ENCODE measurements at regions of chr19 and their contacts with region 1.

Region 1: DNA sequence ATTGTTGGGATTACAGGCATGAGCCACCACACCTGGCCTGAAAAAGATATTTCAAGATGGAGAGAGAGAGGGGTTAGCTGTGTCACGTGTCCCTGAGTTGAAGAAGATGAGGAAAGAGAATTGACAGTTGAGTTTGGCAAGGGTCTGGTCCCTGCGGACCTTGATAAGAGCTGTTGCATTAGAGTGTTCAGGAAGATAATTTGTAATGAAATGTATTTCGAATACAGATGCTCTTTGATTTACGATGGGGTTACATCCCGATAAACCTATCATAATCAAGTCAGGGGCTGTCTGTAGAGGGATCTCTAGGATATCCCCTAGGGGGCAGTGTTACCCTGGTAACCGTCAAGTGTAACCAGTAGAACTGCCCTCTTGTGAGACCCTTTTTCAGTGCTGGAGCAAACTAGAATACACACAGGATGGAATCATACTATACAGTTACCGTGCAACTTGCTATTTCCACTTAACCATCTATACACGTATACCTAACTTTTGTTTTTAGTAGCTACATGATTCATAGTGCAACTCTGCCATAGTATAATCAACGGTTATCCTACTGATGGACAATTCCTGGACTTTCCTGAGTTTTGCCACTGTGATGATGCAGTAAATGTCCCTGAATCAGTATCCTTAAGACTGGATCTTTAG is 1.5 kb upstream of the ELOF1 start:
- DNase-seq: peak in 32 of 35 experiments; percentile 18 to 83 (median 50)
- ATAC-seq: peak in 2 of 4 experiments; percentile 18 to 50
- H3K4me3 ChIP-seq: no peak overlapping the region
- H3K4me3 Mint-ChIP-seq: peak overlapping the region; percentile 63 to 98 (median 86)
- H3K27ac ChIP-seq: no peak overlapping the region
- H3K27ac Mint-ChIP-seq: peak overlapping the region; percentile 13 to 42
- H3K4me1 ChIP-seq: peaks cover 9 to 30% of the 10 kb centered on the region in 2 experiments
- H3K4me1 Mint-ChIP-seq: peaks cover 39 to 43% (median 42%) of the 10 kb centered on the region in 3 donors
- H3K27me3 ChIP-seq: no peaks in the 10 kb centered on the region
- H3K27me3 Mint-ChIP-seq: no peaks in the 10 kb centered on the region

Region 2: GRCh38 chr19:11463391-11463790 is 97.1 kb before region 1 on chr19:
- CTCF ChIA-PET with region 1: no interaction called
- POLR2A ChIA-PET with region 1: no interaction called
- DNase-seq: peak in 1 of 35 experiments; percentile 10
- ATAC-seq: peak in 2 of 4 experiments; percentile 38 to 49
- H3K4me3 ChIP-seq: no peak overlapping the region
- H3K4me3 Mint-ChIP-seq: no peak overlapping the region
- H3K27ac ChIP-seq: no peak overlapping the region
- H3K27ac Mint-ChIP-seq: no peak overlapping the region
- H3K4me1 ChIP-seq: no peaks in the 10 kb centered on the region
- H3K4me1 Mint-ChIP-seq: peaks cover 0 to 4% (median 2%) of the 10 kb centered on the region in 3 donors
- H3K27me3 ChIP-seq: peaks cover 0 to 35% of the 10 kb centered on the region in 2 experiments
- H3K27me3 Mint-ChIP-seq: peaks cover 14 to 15% of the 10 kb centered on the region in 2 donors

Region 3: DNA sequence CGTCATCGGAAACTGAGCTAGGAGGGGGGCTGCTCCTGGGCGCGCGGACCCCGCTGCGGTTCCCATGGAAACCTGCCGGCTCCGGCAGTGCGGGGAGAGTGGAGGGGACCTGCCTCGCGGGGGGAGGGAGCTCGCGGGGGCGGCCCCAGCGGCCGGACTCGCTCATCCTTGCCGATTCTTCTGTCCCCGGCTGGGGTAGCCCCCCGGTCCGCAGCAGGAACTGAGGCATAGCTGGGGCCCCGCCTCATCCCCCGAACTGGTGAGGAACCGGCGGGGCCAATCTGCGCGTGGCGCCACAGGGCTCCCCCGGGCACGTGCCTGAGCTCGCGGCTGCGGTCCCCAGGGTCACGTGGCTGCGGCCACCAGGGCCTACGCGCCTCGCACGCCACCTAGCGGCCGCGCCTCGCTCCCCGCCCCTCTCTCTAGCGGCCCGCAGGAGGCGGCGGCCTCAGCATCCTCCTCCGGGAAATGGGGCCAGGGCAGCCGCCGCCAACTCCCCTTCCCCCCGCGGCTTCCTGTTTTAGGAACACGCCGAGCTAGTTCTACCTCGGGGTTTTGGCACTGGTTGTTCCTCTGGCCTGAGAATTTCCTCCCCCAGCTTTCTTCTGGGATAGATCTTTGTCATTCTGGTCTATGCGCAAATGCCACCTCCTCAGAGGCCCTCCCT is 78.0 kb before region 1 on chr19:
- CTCF ChIA-PET with region 1: no interaction called
- POLR2A ChIA-PET with region 1: no interaction called
- DNase-seq: peak; percentile 52 to 95 (median 79)
- ATAC-seq: peak; percentile 82 to 86 (median 84)
- H3K4me3 ChIP-seq: peak overlapping the region; percentile 14 to 49
- H3K4me3 Mint-ChIP-seq: peak overlapping the region; percentile 31 to 71 (median 70)
- H3K27ac ChIP-seq: no peak overlapping the region
- H3K27ac Mint-ChIP-seq: no peak overlapping the region
- H3K4me1 ChIP-seq: peaks cover 6 to 33% of the 10 kb centered on the region in 2 experiments
- H3K4me1 Mint-ChIP-seq: peaks cover 19 to 30% (median 29%) of the 10 kb centered on the region in 3 donors
- H3K27me3 ChIP-seq: peaks cover 5 to 48% of the 10 kb centered on the region in 2 experiments
- H3K27me3 Mint-ChIP-seq: peaks cover 20 to 35% of the 10 kb centered on the region in 2 donors

Region 4: GRCh38 chr19:11587302-11587974 is 26.9 kb after region 1 on chr19:
- CTCF ChIA-PET with region 1: interaction called, 5 to 10 read pairs
- POLR2A ChIA-PET with region 1: no interaction called
- DNase-seq: peak; percentile 37 to 84 (median 68)
- ATAC-seq: peak; percentile 89 to 93 (median 90)
- H3K4me3 ChIP-seq: no peak overlapping the region
- H3K4me3 Mint-ChIP-seq: no peak overlapping the region
- H3K27ac ChIP-seq: no peak overlapping the region
- H3K27ac Mint-ChIP-seq: no peak overlapping the region
- H3K4me1 ChIP-seq: peaks cover 0 to 2% of the 10 kb centered on the region in 2 experiments
- H3K4me1 Mint-ChIP-seq: peaks cover 2 to 13% (median 10%) of the 10 kb centered on the region in 3 donors
- H3K27me3 ChIP-seq: peaks cover 0 to 2% of the 10 kb centered on the region in 2 experiments
- H3K27me3 Mint-ChIP-seq: no peaks in the 10 kb centered on the region

Region 5: DNA sequence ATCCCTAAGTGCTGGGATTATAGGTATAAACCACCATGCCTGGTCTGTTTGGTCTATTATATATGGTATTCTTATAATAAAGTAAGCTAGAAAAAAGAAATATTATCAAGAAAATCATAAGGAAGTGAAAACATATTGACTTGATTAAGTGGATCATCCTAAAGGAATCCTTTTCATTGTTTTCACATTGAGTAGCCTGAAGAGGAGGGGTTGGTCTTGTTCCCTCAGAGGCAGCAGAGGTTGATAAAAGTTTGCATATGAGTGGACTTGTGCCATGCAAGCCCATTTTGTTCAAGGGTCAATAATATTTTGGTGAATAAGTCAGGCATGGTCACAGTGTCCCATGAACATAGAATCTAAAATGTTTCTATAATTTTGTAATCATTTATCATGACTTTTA is 89.4 kb after region 1 on chr19:
- CTCF ChIA-PET with region 1: no interaction called
- POLR2A ChIA-PET with region 1: no interaction called
- DNase-seq: no peak
- ATAC-seq: no peak
- H3K4me3 ChIP-seq: no peak overlapping the region
- H3K4me3 Mint-ChIP-seq: no peak overlapping the region
- H3K27ac ChIP-seq: no peak overlapping the region
- H3K27ac Mint-ChIP-seq: no peak overlapping the region
- H3K4me1 ChIP-seq: no peaks in the 10 kb centered on the region
- H3K4me1 Mint-ChIP-seq: no peaks in the 10 kb centered on the region
- H3K27me3 ChIP-seq: peaks cover 0 to 3% of the 10 kb centered on the region in 2 experiments
- H3K27me3 Mint-ChIP-seq: peaks cover 0 to 2% of the 10 kb centered on the region in 2 donors